ENCODE measurements at regions of chr1 and their contacts with region 1.

Region 1: DNA sequence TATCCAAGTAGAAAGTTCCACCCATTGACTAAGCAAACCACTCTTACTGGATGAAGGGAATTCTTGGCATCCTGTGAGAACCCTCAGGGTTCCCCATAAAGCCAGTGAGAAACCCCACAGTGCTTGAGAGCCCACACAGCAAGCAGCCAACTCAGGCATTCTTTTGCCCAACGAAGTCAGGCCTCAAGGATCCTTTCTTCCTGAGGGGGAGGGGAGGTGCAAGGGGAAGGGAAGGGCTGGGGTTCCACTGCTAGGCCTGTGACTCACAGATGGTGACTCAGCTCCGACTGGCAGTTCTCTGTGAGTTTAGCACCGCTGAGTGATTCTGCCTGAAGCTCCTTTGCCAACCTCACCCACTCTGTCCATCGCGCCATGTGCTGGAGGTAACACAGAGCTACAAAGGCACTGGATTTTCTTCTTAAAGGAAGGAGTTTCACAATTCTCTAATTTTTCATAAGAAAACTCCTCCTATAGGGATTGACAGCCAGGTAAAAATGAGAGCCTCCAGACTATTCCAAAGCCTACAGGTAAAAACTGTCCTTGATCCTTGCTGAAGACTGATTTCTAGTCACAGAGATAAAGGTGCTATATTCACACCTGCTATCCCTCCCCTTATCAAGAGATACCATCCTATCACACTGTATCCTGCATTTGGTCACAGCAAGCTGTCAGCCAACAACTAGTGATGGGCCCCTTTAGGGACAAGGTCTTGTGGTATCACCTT is 4.8 kb downstream of the ENO1 start:
- DNase-seq: peak; percentile 95 to 96
- ATAC-seq: peak; percentile 87
- H3K4me3 ChIP-seq: no peak overlapping the region
- H3K27ac ChIP-seq: peak overlapping the region in 1 of 2 donors; percentile 31
- H3K4me1 ChIP-seq: peaks cover 0 to 3% of the 10 kb centered on the region in 2 donors
- H3K27me3 ChIP-seq: no peaks in the 10 kb centered on the region

Region 2: DNA sequence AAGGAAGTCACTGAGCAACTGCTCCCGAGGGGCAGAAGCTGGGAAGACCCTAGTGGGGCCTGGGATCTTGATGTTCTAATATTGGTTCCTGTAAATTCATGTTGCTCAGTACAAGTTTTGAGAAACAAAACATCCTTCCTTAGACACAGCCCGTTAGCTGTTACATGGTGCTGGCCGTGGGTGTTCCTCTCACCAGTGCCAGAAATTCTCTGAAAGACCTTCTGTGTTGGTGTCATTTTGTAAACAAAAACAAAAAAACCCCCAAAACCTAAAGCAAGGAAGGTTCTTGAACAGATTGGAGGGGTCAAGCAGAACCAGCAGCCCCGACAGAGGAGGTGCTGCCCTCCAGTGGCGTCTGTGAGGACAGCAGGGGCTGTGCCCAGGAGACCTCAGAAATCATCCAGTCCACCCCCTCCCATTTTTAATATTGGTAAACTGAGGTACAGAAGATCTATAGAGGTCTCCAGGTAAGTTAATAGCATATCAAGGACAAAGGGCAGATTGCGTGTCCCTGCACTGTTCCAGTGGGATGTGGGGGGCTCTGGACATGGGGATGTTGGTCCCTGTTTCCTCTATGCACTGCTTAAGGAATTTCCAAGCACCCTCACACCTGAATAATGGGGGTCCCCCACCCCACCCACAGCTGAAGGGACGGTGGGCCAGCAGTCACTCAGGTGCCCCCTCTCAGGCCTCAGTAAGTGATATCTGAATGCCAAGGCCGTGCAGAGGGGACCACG is 114.4 kb after region 1 on chr1:
- intact Hi-C with region 1: loop called in 1 of 2 experiments (anchors 5 kb)
- DNase-seq: peak; percentile 73 to 85
- ATAC-seq: peak; percentile 77
- H3K4me3 ChIP-seq: no peak overlapping the region
- H3K27ac ChIP-seq: no peak overlapping the region
- H3K4me1 ChIP-seq: peaks cover 0 to 1% of the 10 kb centered on the region in 2 donors
- H3K27me3 ChIP-seq: no peaks in the 10 kb centered on the region